ENCODE measurements at regions of chr10 and their contacts with region 1.

Region 1: DNA sequence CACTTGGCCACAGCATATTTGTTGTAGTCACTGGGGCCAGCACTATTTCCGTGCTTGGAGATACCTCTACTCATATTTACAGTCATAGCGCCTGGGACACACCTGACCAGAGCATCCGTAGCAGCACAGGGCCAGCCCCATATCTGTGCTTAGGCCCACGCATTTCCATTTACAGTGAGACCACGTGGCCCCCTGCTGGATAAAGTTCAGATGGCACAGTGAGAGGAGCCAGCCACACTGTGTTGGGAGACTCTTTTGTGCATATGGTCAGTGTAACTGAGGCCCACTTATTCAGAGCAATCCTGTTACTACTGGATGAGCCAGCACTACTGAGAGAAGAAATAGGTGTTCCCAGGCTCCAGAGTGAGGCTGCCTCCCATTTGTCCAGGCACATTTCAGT is 455.3 kb downstream of the REEP3 start:
- ATAC-seq: peak; percentile 42 to 99 (median 79)
- H3K4me3 ChIP-seq: no peak overlapping the region
- H3K27ac ChIP-seq: no peak overlapping the region
- H3K4me1 ChIP-seq: no peaks in the 10 kb centered on the region

Region 2: DNA sequence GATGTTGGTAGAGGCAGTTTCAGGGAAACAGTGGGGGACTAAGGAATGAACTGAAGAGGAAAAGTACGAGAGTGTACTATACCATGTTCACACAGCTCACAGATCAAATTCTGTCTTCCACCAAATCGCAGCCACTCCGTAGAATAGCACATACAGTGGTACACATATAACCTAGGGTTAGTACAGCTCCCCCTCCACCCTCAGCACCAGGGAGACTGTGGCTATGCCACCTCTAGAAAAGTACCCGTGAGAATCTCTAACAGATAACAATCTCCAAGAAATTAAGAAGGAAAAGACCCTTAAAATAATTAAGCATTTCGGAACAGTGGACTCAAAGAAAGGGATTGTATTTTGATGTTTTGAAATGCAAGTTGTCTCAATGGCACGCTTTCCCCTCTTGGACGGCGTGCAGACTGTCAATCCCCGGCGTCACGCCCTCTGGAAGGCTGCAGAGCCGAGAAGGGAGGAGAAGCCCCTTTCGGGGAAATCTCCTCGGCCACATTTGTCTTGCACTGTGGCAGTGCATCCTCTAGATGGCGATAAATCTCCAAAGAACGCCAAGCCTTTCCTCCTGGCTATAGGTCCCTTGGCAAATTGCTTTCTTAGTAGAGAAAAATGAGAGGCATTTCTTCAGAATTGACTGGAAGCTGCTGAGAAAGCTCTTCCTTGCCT is 110.3 kb before region 1 on chr10:
- in situ Hi-C with region 1: loop called in 2 of 9 experiments (anchors 5 to 10 kb)
- ATAC-seq: peak; percentile 90 to 99 (median 98)
- H3K4me3 ChIP-seq: peak overlapping the region in 1 of 5 donors; percentile 2
- H3K27ac ChIP-seq: no peak overlapping the region
- H3K4me1 ChIP-seq: peaks cover 3% of the 10 kb centered on the region in 2 donors

Region 3: DNA sequence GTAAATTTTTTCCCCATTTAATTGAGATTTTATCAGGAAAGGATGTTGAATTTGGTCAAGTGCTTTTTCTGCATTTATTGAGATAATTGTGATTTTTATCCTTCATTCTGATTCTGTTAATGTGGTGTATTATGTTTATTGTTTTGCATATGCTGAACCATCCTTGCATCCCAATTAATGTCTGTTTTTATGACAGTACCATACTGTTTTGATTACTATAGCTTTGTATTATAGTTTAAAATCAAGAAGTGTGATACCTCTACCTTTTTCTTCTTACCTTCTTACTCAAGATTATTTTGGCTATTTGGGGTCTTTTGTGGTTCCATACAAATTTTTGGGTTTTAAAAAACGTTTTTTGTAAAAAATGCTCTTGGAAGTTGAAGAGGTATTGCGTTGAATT is 98.1 kb before region 1 on chr10:
- in situ Hi-C with region 1: loop called in 2 of 9 experiments (anchors 5 to 10 kb)
- ATAC-seq: no peak
- H3K4me3 ChIP-seq: no peak overlapping the region
- H3K27ac ChIP-seq: no peak overlapping the region
- H3K4me1 ChIP-seq: peaks cover 0 to 2% of the 10 kb centered on the region in 2 donors